OCI-LY7 (cell line): ENCODE measurements at regions of chr1 and their contacts with region 1.

Region 1: GRCh38 chr1:27830621-27831424 is at the start of gene PPP1R8:
- DNase-seq: peak; percentile 97
- H3K4me3 ChIP-seq: peak within 1 kb of the TSS; percentile 92
- H3K27ac ChIP-seq: peak within 1 kb of the TSS; percentile 60
- H3K4me1 ChIP-seq: peaks cover 23% of the 10 kb centered on the region
- CTCF ChIP-seq: no peak
- total RNA-seq, gene PPP1R8: 71.3 and 72.4 TPM in 2 replicates

Region 2: DNA sequence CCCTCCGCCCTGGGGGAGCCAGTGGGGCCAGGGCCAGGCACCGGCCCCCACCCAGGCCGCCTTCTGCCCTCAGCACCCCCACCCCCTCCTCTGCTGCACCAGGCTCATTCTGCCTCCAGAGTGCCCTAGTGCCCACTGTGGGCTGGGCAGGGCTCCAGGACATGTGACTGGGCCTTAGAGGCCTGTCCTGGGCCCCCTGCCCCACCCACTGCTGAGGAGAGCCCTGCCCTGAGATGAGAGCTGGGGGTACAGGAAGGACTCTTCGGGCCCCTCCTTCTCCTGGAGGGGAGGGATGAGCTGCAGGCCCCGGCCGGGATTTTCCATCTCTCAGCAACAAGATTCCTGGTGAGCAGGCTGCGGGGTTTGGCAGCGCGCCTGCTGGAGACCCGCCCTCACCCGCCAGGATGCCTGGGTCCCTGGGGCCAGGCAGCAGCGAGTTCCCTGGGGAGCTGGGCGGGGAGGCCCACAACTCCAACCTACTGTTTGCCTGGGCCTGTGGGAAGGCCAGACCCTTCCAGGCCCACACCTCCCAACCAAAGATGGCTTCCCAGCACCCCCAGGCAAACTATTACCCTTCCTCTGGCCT is 240.9 kb before region 1 on chr1:
- CTCF ChIA-PET with region 1: no interaction called
- POLR2A ChIA-PET with region 1: no interaction called
- intact Hi-C with region 1: no loop called
- DNase-seq: no peak
- H3K4me3 ChIP-seq: no peak overlapping the region
- H3K27ac ChIP-seq: no peak overlapping the region
- H3K4me1 ChIP-seq: no peaks in the 10 kb centered on the region
- CTCF ChIP-seq: no peak

Region 3: DNA sequence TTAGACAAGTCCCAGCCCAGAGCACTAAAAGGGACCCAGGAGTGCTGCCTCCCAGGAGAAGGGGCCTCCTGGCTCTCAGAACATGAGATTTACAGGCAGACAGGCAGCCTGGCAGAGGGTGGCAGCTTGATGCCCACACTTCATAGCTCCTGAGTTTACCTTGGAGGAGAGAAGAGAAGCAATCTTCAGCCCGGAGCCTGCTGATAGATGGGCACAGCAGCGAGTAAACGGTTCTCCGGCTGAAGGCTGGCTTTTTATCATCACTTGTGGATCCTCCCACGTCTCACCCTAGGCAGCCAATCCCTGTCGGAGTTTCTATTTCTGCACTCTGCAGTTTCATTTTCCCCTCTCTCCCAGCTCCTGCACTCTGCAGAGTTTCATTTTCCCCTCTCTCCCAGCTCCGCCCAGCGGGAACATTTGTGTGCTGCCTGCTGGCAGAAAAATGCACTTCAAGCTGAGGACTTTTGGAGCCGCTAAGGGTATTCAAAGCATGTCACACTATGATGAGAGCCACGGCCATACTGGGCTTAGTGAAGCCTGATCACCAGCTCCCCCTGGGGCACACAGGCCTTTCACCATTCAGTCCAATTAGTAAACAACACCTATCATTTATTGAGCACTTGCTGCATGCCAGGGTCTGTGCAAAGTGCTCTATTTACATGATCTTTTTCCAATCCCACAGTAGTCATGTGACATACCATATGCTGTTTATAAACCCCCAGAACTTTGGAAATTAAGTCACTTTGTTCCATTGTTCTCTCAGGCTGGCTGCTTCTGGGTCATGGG is 158.7 kb before region 1 on chr1 and contains the start of gene IFI6:
- CTCF ChIA-PET with region 1: no interaction called
- POLR2A ChIA-PET with region 1: interaction called, 4 read pairs
- intact Hi-C with region 1: loop called (anchors 10 kb)
- DNase-seq: peak; percentile 65
- H3K4me3 ChIP-seq: peak within 1 kb of the TSS; percentile 59
- H3K27ac ChIP-seq: peak within 1 kb of the TSS; percentile 16
- H3K4me1 ChIP-seq: peaks cover 17% of the 10 kb centered on the region
- CTCF ChIP-seq: peak; percentile 64
- total RNA-seq, gene IFI6: 7.7 and 9.5 TPM in 2 replicates

Region 4: DNA sequence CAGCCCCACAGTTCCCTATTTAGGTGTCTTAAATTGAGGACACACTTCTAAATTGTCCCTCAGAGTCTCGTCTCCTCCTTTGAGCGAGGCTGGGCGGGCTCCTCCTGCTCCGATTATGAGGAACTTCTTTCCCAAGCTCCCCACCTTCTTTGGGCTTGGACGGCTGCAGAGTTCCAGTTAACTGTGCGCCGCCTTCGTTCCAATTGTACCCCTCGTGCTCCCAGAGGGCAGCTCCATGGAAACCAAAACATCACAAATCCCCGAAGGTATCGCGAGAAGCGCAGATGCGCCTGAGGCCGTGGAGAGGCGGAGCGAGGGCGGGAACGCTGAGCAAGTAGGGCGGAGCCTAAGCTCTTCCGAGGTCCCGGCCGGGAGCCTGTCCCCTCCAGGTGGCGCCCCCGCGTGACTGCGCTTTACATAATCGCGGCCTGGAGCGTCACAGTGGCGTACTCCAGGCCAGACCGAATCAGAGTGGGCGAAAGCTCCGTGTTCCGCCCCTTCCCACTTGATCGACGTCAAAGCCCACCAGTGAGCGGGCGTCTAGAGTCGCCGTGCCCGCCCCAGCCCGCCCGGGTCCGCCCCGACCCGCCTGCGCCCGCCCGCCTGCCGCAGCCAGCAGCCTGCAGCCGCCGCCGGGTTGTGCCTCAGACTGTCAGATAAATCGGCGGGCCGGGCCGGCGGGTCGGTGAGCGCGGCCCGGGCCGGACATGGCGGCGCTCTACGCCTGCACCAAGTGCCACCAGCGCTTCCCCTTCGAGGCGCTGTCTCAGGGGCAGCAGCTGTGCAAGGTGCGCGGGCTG is 105.2 kb before region 1 on chr1 and contains the start of gene FAM76A:
- CTCF ChIA-PET with region 1: no interaction called
- POLR2A ChIA-PET with region 1: interaction called, 3 read pairs
- intact Hi-C with region 1: loop called (anchors 1 kb)
- DNase-seq: peak; percentile 100
- H3K4me3 ChIP-seq: peak within 1 kb of the TSS; percentile 85
- H3K27ac ChIP-seq: peak within 1 kb of the TSS; percentile 45
- H3K4me1 ChIP-seq: peaks cover 19% of the 10 kb centered on the region
- CTCF ChIP-seq: peak; percentile 74
- total RNA-seq, gene FAM76A: 18.6 and 24.6 TPM in 2 replicates

Region 5: DNA sequence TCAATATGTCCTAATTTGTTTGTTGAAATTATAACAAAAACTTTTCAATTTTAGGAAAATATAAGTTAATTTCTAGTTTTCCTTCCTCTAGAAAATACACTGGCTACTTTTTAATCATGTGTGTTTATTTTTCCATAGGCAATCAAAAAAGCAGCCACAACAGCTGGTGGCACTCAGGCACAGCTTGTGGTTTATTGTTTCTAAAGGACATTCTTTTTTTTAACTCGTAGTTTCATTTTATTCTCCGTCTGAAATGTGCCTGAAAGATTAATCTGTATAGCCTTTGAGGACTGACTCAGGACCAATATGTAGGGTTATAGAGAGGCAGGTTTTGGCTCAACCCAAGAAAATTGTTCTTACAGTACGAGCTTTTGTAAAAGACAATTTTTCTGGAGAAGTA is 78.5 kb before region 1 on chr1:
- CTCF ChIA-PET with region 1: no interaction called
- POLR2A ChIA-PET with region 1: no interaction called
- intact Hi-C with region 1: no loop called
- DNase-seq: peak; percentile 14
- H3K4me3 ChIP-seq: no peak overlapping the region
- H3K27ac ChIP-seq: no peak overlapping the region
- H3K4me1 ChIP-seq: peaks cover 7% of the 10 kb centered on the region
- CTCF ChIP-seq: no peak

Region 6: DNA sequence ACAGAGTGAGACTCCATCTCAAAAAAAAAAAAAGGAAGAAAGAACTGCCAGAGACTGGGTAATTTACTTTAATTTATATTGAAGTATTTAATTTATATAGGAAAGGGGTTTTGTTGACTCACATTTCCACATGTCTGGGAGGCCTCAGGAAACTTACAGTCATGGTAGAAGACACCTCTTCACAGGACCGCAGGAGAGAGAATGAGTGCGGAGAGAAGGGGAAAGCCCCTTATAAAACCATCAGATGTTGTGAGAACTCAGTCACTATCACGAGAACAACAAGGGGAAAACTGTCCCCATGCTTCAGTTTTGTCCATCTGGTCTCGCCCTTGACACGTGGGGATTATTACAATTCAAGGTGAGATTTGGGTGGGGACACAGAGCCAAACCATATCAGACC is 26.0 kb before region 1 on chr1:
- CTCF ChIA-PET with region 1: no interaction called
- POLR2A ChIA-PET with region 1: no interaction called
- intact Hi-C with region 1: no loop called
- DNase-seq: no peak
- H3K4me3 ChIP-seq: no peak overlapping the region
- H3K27ac ChIP-seq: no peak overlapping the region
- H3K4me1 ChIP-seq: no peaks in the 10 kb centered on the region
- CTCF ChIP-seq: no peak

Region 7: DNA sequence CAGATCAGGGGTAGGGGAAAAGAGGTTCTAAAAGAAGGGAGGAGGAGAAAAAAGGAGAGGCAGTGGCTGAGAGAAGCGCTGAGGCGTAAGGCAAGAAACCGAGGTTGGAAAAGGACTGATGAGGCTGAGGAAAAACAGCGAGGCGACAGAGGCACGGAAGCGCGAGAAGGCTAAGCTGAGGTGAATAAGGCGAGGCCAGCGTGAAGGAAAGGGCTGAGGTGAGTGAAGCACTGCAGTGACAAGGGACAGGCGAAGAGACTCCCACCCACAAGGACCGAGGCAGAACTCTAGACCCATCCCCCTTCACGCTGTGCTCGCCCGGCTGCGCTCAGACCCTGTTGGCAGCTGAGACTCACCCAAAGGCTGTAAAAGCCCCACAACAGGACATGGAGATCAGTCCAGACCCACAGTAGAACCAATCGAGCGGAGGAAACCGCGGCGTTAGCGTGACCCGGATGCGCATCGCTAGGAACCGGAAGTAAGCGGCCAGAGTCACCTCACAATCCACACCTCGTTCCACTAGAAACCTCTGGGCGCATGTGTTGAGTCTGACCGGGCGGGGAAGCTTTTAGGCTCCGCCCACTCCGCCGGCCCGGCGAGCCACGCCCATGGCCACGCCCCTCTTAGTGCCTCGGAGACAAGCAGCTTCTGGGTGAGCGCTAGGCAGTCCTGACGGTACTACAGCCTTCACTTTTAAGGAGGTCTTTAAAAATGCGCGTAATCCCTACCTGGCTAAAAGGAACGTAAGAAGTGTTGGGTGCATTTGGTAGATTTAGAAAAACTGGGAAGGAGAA is 257.5 kb after region 1 on chr1 and contains the start of gene EYA3:
- CTCF ChIA-PET with region 1: no interaction called
- POLR2A ChIA-PET with region 1: no interaction called
- intact Hi-C with region 1: no loop called
- DNase-seq: peak; percentile 99
- H3K4me3 ChIP-seq: peak within 1 kb of the TSS; percentile 75
- H3K27ac ChIP-seq: peak within 1 kb of the TSS; percentile 82
- H3K4me1 ChIP-seq: peaks cover 58% of the 10 kb centered on the region
- CTCF ChIP-seq: no peak
- total RNA-seq, gene EYA3: 24.1 and 29.0 TPM in 2 replicates